Lower lobe of right lung (tissue), 2 donors: ENCODE measurements at regions of chr2 and their contacts with region 1.

Region 1: DNA sequence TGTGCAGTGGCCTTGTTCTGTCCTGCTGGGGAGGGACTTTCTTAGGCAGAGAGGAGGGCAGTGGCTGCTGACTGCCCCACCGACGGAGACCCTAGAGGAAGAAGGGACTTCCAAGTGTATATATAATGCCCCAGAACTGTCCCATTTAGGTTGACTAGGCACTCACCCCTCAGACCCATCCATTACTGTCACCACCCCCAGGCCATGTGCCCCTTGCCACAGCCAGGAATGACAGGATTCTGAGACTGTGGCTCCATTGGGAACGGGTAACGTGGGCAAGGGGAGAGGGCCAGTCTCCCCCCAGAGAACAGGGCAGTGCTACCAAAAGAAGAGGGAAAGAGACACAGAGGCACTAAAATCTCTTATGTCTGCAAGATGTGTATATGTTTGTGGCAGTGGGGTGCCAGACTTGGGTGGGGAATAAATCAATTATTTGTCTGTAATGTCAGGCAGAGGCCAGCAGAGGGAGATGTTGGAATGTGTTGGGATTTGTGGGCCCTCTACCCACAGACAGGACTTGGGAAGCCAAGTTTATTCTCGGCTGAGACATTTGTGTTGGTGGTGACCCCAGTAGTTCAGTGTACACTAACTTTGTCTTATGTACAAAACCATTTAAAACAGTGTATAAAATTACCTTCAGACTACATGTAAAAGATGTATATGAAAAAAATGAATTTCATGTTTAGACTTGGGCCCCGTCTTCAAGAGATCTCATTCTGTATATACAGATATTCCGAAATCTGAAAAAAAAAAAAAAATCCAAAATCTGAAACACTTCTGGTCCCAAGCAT is 24.0 kb upstream of the TMEM37 start:
- DNase-seq: no peak
- ATAC-seq: peak; percentile 87
- H3K4me3 ChIP-seq: no peak overlapping the region
- H3K27ac ChIP-seq: no peak overlapping the region
- H3K4me1 ChIP-seq: peaks cover 12% of the 10 kb centered on the region
- H3K27me3 ChIP-seq: no peaks in the 10 kb centered on the region
- CTCF ChIP-seq: peak; percentile 84

Region 2: GRCh38 chr2:119476301-119477021 is 68.8 kb after region 1 on chr2:
- intact Hi-C with region 1: loop called (anchors 5 kb)
- DNase-seq: no peak
- ATAC-seq: peak; percentile 85 to 86
- H3K4me3 ChIP-seq: no peak overlapping the region
- H3K27ac ChIP-seq: no peak overlapping the region
- H3K4me1 ChIP-seq: peaks cover 9% of the 10 kb centered on the region
- H3K27me3 ChIP-seq: no peaks in the 10 kb centered on the region
- CTCF ChIP-seq: peak; percentile 99